Activated T-helper 1 cell treated with anti-CD3 and anti-CD28 coated beads, Interleukin-12 subunit alpha, Interleukin-12 subunit beta, Interleukin-2, Interleukin-4 antibody, amounts not matched to agents 30 ng/mL and 10 ng/mL and 1 ng/mL, durations not matched to agents 14 hours and 24 hours and 36 hours (primary cell): ENCODE measurements at regions of chr1 and their contacts with region 1.

Region 1: GRCh38 chr1:152189657-152190442 is 30.8 kb upstream of the RPTN start:
- DNase-seq: peak; percentile 41
- H3K4me3 Mint-ChIP-seq: peak overlapping the region; percentile 68
- H3K27ac Mint-ChIP-seq: peak overlapping the region; percentile 56
- H3K4me1 Mint-ChIP-seq: peaks cover 6% of the 10 kb centered on the region
- H3K27me3 Mint-ChIP-seq: peaks cover 27% of the 10 kb centered on the region

Region 2: DNA sequence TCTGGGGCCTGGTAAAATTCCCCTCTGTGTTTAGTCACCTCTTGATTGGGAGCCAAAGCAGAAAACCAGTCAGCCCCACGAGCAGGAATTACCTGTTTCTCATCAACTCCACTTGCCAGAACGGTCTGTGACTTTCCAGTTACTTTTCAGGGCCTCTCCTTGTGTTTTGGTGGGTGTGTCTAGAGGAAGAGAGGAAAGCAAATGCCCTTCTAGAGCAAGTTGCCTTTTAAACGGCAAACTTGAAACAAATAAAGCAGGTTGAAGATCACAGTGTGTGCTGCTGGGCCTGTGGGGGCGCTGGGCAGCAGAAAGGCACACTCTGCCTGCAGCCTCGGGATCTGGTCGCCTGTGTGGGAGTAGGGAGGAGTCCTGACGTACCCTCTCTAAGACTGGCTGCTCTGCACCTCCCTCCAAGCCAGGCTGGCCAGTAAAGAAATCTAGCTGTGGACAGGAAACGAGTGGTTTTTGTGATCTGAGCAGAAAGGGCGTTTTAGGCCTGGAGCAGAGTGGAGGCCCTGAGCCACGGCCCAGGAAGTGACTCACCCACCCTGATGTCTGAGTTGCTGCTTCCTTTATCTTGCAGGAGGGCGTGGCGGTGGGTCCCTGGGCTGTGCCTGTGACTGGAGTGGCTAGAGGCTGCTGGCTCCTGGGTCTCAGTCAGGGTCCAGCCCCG is 142.0 kb before region 1 on chr1:
- intact Hi-C with region 1: loop called (anchors 1 kb)
- DNase-seq: peak; percentile 83
- H3K4me3 Mint-ChIP-seq: peak overlapping the region; percentile 80
- H3K27ac Mint-ChIP-seq: peak overlapping the region; percentile 96
- H3K4me1 Mint-ChIP-seq: peaks cover 40% of the 10 kb centered on the region
- H3K27me3 Mint-ChIP-seq: peaks cover 3% of the 10 kb centered on the region

Region 3: GRCh38 chr1:152141974-152142584 is 47.8 kb before region 1 on chr1:
- intact Hi-C with region 1: loop called (anchors 1 kb)
- DNase-seq: no peak
- H3K4me3 Mint-ChIP-seq: no peak overlapping the region
- H3K27ac Mint-ChIP-seq: no peak overlapping the region
- H3K4me1 Mint-ChIP-seq: no peaks in the 10 kb centered on the region
- H3K27me3 Mint-ChIP-seq: peaks cover 18% of the 10 kb centered on the region

Region 4: GRCh38 chr1:152167835-152168519 is 21.9 kb before region 1 on chr1:
- intact Hi-C with region 1: no loop called
- DNase-seq: no peak
- H3K4me3 Mint-ChIP-seq: no peak overlapping the region
- H3K27ac Mint-ChIP-seq: no peak overlapping the region
- H3K4me1 Mint-ChIP-seq: peaks cover 7% of the 10 kb centered on the region
- H3K27me3 Mint-ChIP-seq: no peaks in the 10 kb centered on the region

Region 5: DNA sequence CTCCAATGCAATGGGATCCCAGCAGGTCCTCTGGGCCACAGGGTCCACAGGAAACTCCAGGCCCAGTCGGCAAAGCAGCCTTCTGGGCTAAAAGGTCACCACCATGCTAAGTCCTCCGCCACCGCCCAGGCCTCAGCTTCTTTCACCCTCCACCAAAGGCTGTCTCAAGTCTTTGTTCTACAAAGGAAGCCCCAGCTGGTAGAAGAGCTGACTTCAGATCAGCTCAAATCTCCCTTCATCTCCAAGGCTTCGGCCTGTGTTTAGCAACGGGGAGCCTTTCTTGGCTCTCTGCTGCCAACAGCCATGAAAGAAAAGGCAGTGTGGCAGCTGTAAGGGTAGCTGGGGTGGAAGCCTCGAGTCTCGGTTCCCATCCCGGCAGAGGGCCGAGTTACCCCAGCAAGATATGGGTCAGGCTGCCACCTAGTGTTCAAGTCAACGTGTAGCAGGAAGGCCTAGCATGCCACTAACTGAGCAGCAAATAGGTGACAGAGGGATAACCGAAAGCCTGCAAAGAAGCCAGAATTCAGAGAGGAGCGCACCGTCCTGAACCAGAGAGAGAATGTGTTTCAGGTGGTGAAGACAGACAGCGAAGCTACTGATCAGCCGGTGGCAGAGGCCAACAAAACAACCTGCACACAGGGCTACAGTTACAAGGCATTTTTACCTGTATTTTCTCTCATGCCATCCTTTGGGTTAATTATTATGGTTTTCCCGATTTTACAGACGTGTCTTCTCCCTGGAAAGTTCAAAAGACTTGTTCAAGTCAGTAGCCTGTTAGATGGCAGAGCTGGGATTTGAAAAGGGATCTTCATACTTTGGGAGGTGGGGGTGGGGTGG is 251.0 kb after region 1 on chr1:
- intact Hi-C with region 1: loop called (anchors 1 kb)
- DNase-seq: peak; percentile 36
- H3K4me3 Mint-ChIP-seq: no peak overlapping the region
- H3K27ac Mint-ChIP-seq: no peak overlapping the region
- H3K4me1 Mint-ChIP-seq: peaks cover 4% of the 10 kb centered on the region
- H3K27me3 Mint-ChIP-seq: peaks cover 20% of the 10 kb centered on the region